Activated naive CD4-positive, alpha-beta T cell treated with anti-CD3 and anti-CD28 coated beads for 36 hours (primary cell): ENCODE measurements at regions of chr10 and their contacts with region 1.

Region 1: DNA sequence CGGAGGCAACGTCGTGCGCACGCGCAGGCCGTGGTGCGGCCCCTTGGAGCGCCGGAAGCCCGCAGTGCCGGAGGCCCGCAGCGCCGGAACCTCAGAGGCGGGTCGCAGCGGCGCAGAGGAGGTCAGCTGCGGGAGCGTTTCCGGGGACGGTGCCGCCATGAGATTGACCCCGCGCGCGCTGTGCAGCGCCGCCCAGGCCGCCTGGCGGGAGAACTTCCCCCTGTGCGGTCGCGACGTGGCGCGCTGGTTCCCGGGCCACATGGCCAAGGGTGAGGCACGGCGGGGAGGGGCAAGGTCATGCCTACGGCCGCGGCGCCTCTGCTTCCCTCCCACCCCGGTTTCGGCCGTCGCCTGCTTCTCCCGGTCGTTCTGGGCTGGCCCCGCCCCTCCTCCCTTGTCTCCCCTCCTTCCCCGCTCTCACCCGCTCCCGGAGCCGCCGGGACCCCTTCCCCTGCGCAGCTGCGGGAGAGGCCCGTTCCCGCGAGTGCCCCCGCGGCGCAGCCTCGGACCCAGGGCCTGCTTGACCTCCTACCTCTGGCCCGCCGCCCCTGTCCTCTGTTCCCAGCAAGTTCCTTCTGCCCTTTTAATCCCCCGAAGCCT is at the start of gene MTG1:
- DNase-seq: peak; percentile 94
- H3K4me3 Mint-ChIP-seq: peak within 1 kb of the TSS; percentile 96
- H3K27ac Mint-ChIP-seq: peak within 1 kb of the TSS; percentile 90
- H3K4me1 Mint-ChIP-seq: peaks cover 55% of the 10 kb centered on the region
- H3K27me3 Mint-ChIP-seq: no peaks in the 10 kb centered on the region
- total RNA-seq, gene MTG1: 31.6 to 32.9 TPM

Region 2: DNA sequence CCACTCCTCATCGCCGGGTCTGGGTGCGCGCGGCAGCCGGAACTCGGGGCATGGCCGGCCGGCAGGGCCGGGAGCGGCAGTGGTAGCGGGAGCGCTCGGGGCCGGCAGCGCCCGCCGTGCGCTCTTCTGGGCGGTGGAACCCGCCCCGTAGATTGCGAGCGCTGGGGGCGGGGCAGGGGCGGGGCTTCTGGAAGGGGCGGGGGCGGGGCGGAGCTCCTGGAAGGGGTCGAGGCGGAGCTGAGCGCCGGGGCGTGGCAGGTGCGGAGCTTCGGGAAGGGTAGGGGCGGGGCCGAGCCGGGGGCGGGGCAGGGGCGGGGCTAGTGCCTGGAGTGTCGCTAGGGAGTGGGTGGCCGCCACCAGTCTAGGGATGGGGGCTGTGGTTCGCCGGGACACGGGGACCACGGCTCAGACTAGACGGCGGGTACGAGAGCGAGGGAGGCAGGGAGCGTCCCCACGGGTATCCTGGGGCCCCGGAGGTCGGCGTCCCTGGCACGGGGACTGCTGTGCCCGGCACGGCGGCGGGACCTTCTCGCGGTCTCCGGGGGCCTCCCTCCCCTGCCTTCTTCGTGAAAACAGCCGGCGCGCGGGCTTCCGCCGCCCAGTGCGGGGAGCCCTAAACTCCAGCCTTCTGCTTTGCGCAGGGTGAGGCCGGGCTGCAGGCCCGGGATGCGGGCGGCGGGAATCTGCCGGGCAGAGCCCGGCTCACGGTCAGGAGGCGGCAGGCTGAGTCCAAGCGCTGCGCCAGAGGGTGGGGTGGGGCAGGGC is 1086.2 kb before region 1 on chr10 and contains the start of gene STK32C:
- CTCF ChIA-PET with region 1: no interaction called
- intact Hi-C with region 1: loop called (anchors 10 kb)
- DNase-seq: peak; percentile 90
- H3K4me3 Mint-ChIP-seq: peak within 1 kb of the TSS; percentile 85
- H3K27ac Mint-ChIP-seq: no peak within 1 kb of the TSS
- H3K4me1 Mint-ChIP-seq: peaks cover 9% of the 10 kb centered on the region
- H3K27me3 Mint-ChIP-seq: peaks cover 2% of the 10 kb centered on the region
- total RNA-seq, gene STK32C: 16.5 to 16.6 TPM

Region 3: GRCh38 chr10:132939957-132940790 is 454.0 kb before region 1 on chr10:
- CTCF ChIA-PET with region 1: no interaction called
- intact Hi-C with region 1: loop called (anchors 10 kb)
- DNase-seq: peak; percentile 72
- H3K4me3 Mint-ChIP-seq: no peak overlapping the region
- H3K27ac Mint-ChIP-seq: no peak overlapping the region
- H3K4me1 Mint-ChIP-seq: peaks cover 5% of the 10 kb centered on the region
- H3K27me3 Mint-ChIP-seq: peaks cover 53% of the 10 kb centered on the region

Region 4: DNA sequence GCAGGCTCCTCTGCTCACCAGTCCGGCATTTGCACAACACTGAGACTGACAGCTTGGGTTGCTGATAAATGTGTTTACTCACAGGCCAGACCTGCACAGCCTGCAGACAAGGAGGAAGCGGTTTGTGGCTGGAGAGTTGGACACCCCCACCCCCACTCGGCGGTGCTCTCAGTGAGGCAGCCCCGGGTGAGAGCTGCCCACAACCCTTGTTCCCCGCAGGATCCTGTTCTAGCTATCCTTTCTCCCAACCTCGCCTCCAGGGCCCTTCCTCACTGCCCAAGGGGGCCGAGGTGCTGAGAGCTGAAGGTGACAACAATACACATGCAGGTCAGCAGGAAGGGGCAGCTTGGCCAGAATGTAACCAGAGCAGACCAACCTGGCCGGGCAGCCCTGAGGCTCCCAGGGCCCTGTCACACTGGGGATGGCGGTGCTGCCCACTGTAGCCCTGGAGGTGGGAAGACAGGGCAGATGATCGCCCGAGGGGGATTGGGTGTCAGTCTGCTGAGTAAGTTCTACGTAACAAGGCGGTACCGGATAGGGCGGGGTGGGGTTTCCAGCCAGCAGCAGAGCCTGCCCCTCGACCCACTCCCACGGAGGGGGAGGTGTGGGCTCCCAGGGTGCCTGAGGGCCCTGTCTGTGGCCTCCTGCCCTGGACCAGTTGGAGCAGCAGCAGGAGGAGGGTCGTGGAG is 115.4 kb before region 1 on chr10:
- CTCF ChIA-PET with region 1: no interaction called
- intact Hi-C with region 1: loop called (anchors 1 kb)
- DNase-seq: no peak
- H3K4me3 Mint-ChIP-seq: no peak overlapping the region
- H3K27ac Mint-ChIP-seq: peak overlapping the region; percentile 19
- H3K4me1 Mint-ChIP-seq: peaks cover 23% of the 10 kb centered on the region
- H3K27me3 Mint-ChIP-seq: no peaks in the 10 kb centered on the region

Region 5: DNA sequence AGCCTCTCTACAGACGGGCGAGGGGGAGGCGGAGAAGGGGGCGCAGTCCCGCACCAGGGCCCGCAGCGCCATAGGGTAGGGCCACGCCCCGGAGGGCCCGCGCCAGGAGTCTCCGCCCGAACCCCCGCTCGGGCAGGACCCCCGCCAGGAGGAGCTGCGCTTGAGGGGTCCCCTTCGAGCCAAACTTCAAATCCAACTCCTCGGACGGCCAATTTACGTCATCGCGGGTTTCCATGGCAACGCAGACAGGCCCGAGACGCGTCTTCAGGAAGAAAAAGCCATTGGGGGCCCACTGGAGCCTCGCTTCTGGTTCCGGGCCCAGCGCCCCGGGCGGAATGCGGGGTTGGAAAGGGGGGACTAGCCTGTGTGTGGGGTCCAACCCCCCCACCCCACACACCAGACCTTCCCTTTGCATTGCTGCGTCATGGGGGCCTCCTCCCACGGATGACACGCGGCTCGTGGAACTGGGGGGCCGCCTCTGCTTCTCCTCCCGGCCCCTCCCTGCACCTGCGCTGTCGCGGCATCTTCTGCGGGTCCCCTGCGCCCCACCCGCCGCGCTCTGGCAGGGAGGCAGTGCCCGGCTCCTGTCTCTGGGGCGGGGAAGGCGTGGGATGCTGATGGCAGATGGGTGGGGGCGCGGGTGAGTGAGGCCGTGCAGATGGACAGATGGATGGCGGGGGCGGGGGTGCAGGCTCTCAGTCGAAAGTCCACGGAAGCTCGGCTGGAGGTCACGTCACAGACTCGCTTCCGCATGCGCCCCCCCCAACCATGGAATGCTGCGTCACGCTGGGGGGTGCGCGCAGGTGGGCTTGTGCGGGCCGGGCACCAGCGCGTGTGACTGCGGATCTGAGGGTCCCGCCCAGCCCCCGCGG is 58.7 kb before region 1 on chr10:
- CTCF ChIA-PET with region 1: no interaction called
- intact Hi-C with region 1: loop called (anchors 2 kb)
- DNase-seq: peak; percentile 84
- H3K4me3 Mint-ChIP-seq: peak overlapping the region; percentile 47
- H3K27ac Mint-ChIP-seq: no peak overlapping the region
- H3K4me1 Mint-ChIP-seq: peaks cover 5% of the 10 kb centered on the region
- H3K27me3 Mint-ChIP-seq: peaks cover 12% of the 10 kb centered on the region

Region 6: GRCh38 chr10:133373104-133373624 is 21.0 kb before region 1 on chr10 and contains the start of gene ECHS1:
- CTCF ChIA-PET with region 1: no interaction called
- intact Hi-C with region 1: loop called (anchors 1 kb)
- DNase-seq: peak; percentile 96
- H3K4me3 Mint-ChIP-seq: peak within 1 kb of the TSS; percentile 77
- H3K27ac Mint-ChIP-seq: no peak within 1 kb of the TSS
- H3K4me1 Mint-ChIP-seq: peaks cover 12% of the 10 kb centered on the region
- H3K27me3 Mint-ChIP-seq: no peaks in the 10 kb centered on the region
- total RNA-seq, gene ECHS1: 45.8 to 48.7 TPM

Region 7: DNA sequence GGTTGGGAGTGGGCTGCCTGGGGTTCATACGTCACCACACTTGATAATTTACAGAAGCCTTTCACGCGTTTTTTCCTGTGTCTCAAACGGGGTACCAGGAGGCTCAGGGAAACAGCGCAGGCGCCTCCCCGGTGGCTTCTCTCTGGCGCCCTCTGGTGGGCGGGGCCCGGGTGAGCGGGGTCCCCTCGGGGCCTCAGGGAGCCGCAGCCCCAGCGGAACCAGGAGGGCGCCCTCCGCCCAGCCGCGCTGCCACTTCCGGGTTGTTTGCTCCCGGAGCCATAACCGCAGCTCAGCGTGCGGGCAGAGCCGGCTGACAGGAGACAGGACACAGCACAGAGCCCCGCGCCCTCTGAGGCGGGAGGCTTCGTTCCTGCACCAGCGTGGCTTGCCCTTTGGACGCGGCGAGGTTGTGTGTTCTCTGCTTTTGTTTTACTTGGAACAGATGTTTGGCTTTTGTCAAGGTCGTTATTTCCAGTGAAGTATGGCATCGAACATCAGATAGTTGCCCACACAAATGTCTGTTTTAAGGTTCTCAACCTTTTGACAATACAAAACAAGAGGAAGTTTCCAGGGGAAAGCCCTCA is 126.1 kb after region 1 on chr10:
- CTCF ChIA-PET with region 1: no interaction called
- intact Hi-C with region 1: loop called (anchors 2 kb)
- DNase-seq: peak; percentile 96
- H3K4me3 Mint-ChIP-seq: peak overlapping the region; percentile 73
- H3K27ac Mint-ChIP-seq: peak overlapping the region; percentile 8
- H3K4me1 Mint-ChIP-seq: peaks cover 6% of the 10 kb centered on the region
- H3K27me3 Mint-ChIP-seq: no peaks in the 10 kb centered on the region